Activated naive CD4-positive, alpha-beta T cell treated with anti-CD3 and anti-CD28 coated beads for 36 hours (primary cell): ENCODE measurements at regions of chr16 and their contacts with region 1.

Region 1: DNA sequence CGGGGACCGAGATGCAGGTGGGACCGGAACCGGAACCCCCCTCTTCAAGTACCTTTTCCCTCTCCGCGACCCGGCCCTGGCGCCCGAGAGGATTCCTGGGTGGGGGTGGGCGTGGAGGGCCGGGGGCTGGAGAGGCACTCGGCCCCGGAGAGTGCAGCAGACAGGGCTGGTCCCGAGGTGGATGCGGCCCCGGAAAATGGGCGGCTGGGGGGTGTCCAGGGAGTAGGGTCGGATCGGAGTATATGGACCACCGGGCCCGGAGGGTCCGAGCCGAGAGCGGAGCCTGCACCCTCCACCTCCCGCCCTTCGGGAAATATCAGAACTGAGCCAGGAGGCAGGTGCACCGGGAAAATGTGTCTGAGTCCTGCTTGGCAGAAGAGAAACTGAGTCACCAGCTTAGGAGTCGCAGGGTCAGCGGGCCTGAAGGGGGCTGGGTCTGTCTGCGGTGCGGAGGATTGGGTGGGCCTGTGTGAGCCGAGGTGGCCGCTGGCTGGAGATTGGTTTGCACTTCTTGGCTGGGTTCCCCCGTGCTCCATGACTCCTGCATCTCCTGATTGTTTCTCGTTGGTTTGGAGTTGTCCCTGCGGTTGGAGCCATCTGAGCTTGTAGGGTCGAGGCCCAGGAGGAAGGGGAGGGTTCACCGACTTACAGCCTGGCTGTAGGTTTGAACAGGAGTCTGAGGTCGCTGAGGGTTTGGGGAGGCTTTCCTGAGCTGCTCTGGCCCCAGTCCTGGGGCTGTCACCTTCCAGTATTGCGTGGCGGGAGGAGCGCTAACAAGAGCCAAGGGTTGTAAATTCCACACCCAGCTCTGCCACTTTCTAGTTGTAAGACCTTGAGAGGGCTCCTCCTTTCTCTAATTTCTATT is 518 bp downstream of the SH2B1 start:
- DNase-seq: peak; percentile 21
- H3K4me3 Mint-ChIP-seq: peak overlapping the region; percentile 95
- H3K27ac Mint-ChIP-seq: peak overlapping the region; percentile 96
- H3K4me1 Mint-ChIP-seq: peaks cover 17% of the 10 kb centered on the region
- H3K27me3 Mint-ChIP-seq: no peaks in the 10 kb centered on the region

Region 2: DNA sequence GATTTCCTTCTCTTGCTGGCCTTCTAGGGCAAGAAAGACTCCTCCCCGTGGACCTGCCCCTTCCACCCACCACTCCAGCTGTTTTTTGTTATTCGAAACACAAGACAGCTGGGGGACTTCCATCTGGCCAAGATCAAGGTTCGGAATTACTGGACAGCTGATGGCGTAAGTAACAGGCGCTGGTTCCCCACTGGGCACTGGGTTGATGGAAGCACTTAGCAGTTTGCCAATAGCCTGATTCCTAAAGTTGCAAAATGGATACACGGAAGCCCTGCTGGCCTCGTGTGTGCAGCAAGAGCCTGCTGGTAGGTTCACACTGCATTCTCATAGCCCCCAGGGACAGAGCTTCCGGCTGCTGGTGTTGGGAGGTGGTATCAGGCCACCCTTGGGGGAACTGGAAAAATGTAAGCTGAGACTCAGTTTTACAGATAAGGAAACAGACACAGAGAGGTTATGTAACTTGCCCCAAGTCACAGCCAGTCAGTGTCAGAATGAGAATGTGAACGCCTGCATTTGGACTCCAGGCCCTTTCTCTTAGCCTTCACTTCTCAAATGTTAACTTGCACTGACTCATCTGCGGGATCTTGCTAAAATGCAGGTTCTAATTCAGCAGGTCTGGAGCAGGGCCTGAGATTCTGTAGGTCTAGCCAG is 1142.5 kb before region 1 on chr16:
- CTCF ChIA-PET with region 1: no interaction called
- intact Hi-C with region 1: no loop called
- DNase-seq: no peak
- H3K4me3 Mint-ChIP-seq: no peak overlapping the region
- H3K27ac Mint-ChIP-seq: no peak overlapping the region
- H3K4me1 Mint-ChIP-seq: no peaks in the 10 kb centered on the region
- H3K27me3 Mint-ChIP-seq: no peaks in the 10 kb centered on the region

Region 3: GRCh38 chr16:28846080-28846932 is 17.9 kb before region 1 on chr16 and contains the start of gene TUFM:
- CTCF ChIA-PET with region 1: interaction called, 8 read pairs
- intact Hi-C with region 1: loop called (anchors 1 kb)
- DNase-seq: peak; percentile 98
- H3K4me3 Mint-ChIP-seq: peak within 1 kb of the TSS; percentile 98
- H3K27ac Mint-ChIP-seq: peak within 1 kb of the TSS; percentile 96
- H3K4me1 Mint-ChIP-seq: peaks cover 28% of the 10 kb centered on the region
- H3K27me3 Mint-ChIP-seq: no peaks in the 10 kb centered on the region
- total RNA-seq, gene TUFM: 276 to 289 TPM

Region 4: GRCh38 chr16:28879841-28880588 is 15.9 kb after region 1 on chr16:
- CTCF ChIA-PET with region 1: interaction called, 3 read pairs
- intact Hi-C with region 1: loop called (anchors 1 kb)
- DNase-seq: peak; percentile 95
- H3K4me3 Mint-ChIP-seq: peak overlapping the region; percentile 90
- H3K27ac Mint-ChIP-seq: peak overlapping the region; percentile 24
- H3K4me1 Mint-ChIP-seq: peaks cover 20% of the 10 kb centered on the region
- H3K27me3 Mint-ChIP-seq: peaks cover 13% of the 10 kb centered on the region

Region 5: DNA sequence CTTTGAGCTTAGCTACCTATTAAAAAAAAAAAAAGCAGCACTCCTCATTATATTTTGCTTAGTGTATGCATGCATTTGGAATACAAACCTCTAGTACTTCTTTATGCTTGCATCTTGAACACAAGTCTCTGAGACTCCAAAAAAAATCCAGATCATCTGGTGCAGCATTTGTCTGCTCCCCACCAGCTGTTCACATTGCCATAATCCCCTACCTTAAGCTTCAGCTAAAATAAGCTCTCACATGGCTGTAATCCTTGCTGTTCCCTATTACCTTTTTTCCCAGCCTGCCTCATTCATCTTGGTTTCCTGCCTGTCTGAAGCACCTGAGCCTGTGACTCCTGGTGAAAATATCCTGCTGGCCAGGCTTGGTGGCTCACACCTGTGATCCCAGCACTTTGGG is 79.1 kb after region 1 on chr16:
- CTCF ChIA-PET with region 1: interaction called, 20 read pairs
- intact Hi-C with region 1: loop called (anchors 1 kb)
- DNase-seq: no peak
- H3K4me3 Mint-ChIP-seq: no peak overlapping the region
- H3K27ac Mint-ChIP-seq: no peak overlapping the region
- H3K4me1 Mint-ChIP-seq: peaks cover 7% of the 10 kb centered on the region
- H3K27me3 Mint-ChIP-seq: no peaks in the 10 kb centered on the region

Region 6: GRCh38 chr16:28974437-28975157 is 110.4 kb after region 1 on chr16 and contains the start of gene SPNS1:
- CTCF ChIA-PET with region 1: no interaction called
- intact Hi-C with region 1: no loop called
- DNase-seq: peak; percentile 97
- H3K4me3 Mint-ChIP-seq: peak within 1 kb of the TSS; percentile 97
- H3K27ac Mint-ChIP-seq: peak within 1 kb of the TSS; percentile 91
- H3K4me1 Mint-ChIP-seq: peaks cover 34% of the 10 kb centered on the region
- H3K27me3 Mint-ChIP-seq: no peaks in the 10 kb centered on the region
- total RNA-seq, gene SPNS1: 10.3 to 10.5 TPM

Region 7: GRCh38 chr16:29023279-29024277 is 159.4 kb after region 1 on chr16:
- CTCF ChIA-PET with region 1: no interaction called
- intact Hi-C with region 1: loop called (anchors 5 kb)
- DNase-seq: no peak
- H3K4me3 Mint-ChIP-seq: no peak overlapping the region
- H3K27ac Mint-ChIP-seq: no peak overlapping the region
- H3K4me1 Mint-ChIP-seq: peaks cover 73% of the 10 kb centered on the region
- H3K27me3 Mint-ChIP-seq: no peaks in the 10 kb centered on the region